Activated CD4-positive, alpha-beta T cell treated with anti-CD3 and anti-CD28 coated beads for 36 hours (primary cell): ENCODE measurements at regions of chr1 and their contacts with region 1.

Region 1: DNA sequence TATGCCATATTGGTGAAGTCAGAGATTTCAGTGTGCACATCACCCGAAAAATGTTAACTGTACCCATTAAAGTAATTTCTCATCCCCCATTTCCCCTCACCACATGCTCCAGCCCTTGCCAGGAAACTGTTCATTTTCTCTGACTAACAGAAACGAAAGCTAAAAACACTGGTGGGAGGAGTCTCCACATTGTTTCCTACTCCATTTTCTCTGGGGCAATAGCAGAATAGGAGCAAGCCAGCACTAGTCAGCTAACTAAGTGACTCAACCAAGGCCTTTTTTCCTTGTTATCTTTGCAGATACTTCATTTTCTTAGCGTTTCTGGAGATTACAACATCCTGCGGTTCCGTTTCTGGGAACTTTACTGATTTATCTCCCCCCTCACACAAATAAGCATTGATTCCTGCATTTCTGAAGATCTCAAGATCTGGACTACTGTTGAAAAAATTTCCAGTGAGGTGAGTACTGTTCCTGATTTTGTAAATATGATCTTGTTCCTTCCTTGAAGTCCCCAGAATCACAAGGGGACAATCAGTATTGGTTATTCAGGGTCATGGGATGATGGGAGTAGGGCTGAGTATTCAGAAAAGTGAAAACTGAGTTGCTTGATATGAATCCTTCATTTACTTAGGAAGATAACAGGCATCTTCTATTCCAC is at the start of gene IFI16:
- DNase-seq: peak; percentile 75
- ATAC-seq: peak; percentile 70
- H3K4me3 Mint-ChIP-seq: peak within 1 kb of the TSS; percentile 82
- H3K27ac Mint-ChIP-seq: peak within 1 kb of the TSS; percentile 97
- H3K4me1 Mint-ChIP-seq: peaks cover 43% of the 10 kb centered on the region
- H3K27me3 Mint-ChIP-seq: no peaks in the 10 kb centered on the region
- total RNA-seq, gene IFI16: 263 to 308 TPM

Region 2: DNA sequence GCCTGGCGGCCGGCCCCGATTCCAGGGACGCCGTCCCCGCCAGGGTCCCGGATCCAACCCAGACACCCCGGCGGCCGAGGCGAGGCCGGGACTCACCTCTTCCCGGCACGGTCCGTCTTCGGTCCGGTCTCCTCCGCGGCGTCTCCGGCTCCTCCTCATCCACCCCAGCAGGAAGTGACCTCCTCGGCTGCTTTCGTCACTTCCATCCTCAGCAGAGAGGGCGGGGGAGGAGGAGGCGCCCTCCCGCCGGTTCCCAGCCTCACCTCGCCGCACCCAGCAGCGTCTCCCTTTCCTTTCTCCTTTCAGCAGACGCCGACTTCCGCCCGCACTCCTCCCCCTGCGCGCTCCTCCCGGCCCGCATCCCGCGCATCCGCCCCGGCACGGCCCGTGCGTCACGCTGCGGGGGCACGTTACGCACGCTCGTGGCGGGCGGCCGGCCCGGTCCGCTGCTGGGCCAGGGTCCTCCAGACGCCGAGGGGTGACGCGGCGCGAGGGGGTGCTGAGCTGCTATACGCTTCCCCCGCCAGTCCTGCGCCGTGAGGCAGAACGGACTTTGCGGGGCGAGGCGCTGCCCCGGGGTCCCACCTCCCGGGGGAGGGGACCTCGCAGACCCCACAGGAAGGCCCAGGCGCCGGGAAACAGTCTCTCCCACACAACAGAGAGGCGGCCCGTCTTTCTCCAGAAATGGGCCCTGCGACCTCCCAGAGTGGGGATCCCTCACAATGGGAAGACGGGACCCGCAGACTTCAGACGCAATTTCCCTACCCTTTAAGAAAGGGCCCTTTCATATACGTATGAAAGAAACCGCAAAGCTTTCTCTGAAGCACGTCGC is 1871.4 kb before region 1 on chr1 and contains the start of gene ETV3:
- CTCF ChIA-PET with region 1: no interaction called
- POLR2A ChIA-PET with region 1: no interaction called
- intact Hi-C with region 1: loop called (anchors 5 kb)
- DNase-seq: peak; percentile 94
- ATAC-seq: peak; percentile 72
- H3K4me3 Mint-ChIP-seq: peak within 1 kb of the TSS; percentile 97
- H3K27ac Mint-ChIP-seq: peak within 1 kb of the TSS; percentile 95
- H3K4me1 Mint-ChIP-seq: peaks cover 75% of the 10 kb centered on the region
- H3K27me3 Mint-ChIP-seq: no peaks in the 10 kb centered on the region
- total RNA-seq, gene ETV3: 32.0 to 36.7 TPM

Region 3: GRCh38 chr1:158654571-158654970 is 355.3 kb before region 1 on chr1:
- CTCF ChIA-PET with region 1: no interaction called
- POLR2A ChIA-PET with region 1: no interaction called
- intact Hi-C with region 1: no loop called
- DNase-seq: peak; percentile 4
- ATAC-seq: no peak
- H3K4me3 Mint-ChIP-seq: no peak overlapping the region
- H3K27ac Mint-ChIP-seq: no peak overlapping the region
- H3K4me1 Mint-ChIP-seq: peaks cover 3% of the 10 kb centered on the region
- H3K27me3 Mint-ChIP-seq: peaks cover 4% of the 10 kb centered on the region

Region 4: DNA sequence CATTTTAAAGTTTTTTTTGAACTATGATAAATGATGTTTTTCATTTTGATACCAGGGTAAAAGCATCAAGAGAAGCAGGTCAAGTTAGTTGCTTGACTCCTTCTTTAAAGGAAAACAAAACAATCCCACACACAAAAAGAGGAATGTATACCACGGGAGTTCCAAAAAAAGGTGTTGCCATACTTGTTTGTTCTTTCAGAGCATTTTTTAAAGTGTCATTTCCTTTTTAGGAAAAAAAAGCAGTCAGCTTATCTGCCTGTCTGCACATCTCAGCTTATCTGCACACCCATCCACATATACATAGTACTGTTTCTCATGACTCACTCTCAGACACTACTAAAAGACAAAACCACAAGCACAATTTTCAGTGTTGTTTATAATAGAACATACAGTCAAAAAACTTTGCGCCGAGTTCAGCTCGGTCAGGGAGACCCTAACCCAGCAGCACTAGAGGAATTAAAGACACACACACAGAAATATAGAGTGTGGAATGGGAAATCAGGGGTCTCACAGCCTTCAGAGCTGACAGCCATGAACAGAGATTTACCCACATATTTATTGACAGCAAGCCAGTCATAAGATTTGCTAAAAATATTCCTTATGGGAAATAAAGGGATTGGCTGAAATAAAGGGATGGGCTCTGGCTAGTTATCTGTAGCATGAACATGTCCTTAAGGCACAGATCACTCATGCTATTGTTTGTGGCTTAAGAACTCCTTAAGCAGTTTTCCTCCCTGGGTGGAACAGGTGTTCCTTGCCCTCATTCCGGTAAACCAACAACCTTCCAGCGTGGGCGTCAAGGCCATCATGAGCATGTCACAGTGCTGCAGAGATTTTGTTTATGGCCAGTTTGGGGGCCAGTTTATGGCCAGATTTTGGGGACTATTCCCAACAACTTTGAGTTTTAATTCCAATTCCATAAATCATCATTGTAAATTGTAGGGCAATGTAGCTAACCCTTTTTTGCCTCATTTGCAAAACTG is 190.1 kb before region 1 on chr1:
- CTCF ChIA-PET with region 1: no interaction called
- POLR2A ChIA-PET with region 1: interaction called, 3 read pairs
- intact Hi-C with region 1: loop called in 1 of 2 experiments (anchors 5 kb)
- DNase-seq: peak; percentile 21
- ATAC-seq: peak; percentile 99
- H3K4me3 Mint-ChIP-seq: no peak overlapping the region
- H3K27ac Mint-ChIP-seq: peak overlapping the region; percentile 34
- H3K4me1 Mint-ChIP-seq: peaks cover 17% of the 10 kb centered on the region
- H3K27me3 Mint-ChIP-seq: peaks cover 3% of the 10 kb centered on the region

Region 5: DNA sequence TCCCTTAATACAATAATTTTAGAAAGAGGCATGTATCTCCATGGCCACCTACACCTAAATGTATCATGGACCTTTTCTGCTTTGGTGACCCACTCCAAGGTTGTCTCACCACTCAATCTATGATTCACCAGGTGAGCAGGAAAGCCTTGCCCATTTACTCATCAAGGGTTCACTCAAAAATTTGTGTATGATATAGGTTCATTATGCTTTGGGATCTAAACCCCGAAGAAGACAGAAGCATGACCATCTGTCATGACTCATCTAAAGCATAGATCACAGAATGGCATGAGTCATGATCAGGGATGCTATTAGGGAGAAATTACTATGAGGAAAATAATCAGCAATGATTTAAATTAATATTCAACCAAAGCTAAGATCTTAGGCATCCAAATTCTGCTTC is 40.0 kb before region 1 on chr1:
- CTCF ChIA-PET with region 1: no interaction called
- POLR2A ChIA-PET with region 1: no interaction called
- intact Hi-C with region 1: loop called (anchors 1 kb)
- DNase-seq: peak; percentile 25
- ATAC-seq: peak; percentile 72
- H3K4me3 Mint-ChIP-seq: no peak overlapping the region
- H3K27ac Mint-ChIP-seq: peak overlapping the region; percentile 88
- H3K4me1 Mint-ChIP-seq: peaks cover 25% of the 10 kb centered on the region
- H3K27me3 Mint-ChIP-seq: peaks cover 3% of the 10 kb centered on the region

Region 6: GRCh38 chr1:159071970-159072582 is 62.2 kb after region 1 on chr1:
- CTCF ChIA-PET with region 1: interaction called, 17 read pairs
- POLR2A ChIA-PET with region 1: interaction called, 43 read pairs
- intact Hi-C with region 1: loop called (anchors 1 kb)
- DNase-seq: no peak
- ATAC-seq: peak; percentile 12
- H3K4me3 Mint-ChIP-seq: peak overlapping the region; percentile 42
- H3K27ac Mint-ChIP-seq: peak overlapping the region; percentile 63
- H3K4me1 Mint-ChIP-seq: peaks cover 52% of the 10 kb centered on the region
- H3K27me3 Mint-ChIP-seq: no peaks in the 10 kb centered on the region

Region 7: DNA sequence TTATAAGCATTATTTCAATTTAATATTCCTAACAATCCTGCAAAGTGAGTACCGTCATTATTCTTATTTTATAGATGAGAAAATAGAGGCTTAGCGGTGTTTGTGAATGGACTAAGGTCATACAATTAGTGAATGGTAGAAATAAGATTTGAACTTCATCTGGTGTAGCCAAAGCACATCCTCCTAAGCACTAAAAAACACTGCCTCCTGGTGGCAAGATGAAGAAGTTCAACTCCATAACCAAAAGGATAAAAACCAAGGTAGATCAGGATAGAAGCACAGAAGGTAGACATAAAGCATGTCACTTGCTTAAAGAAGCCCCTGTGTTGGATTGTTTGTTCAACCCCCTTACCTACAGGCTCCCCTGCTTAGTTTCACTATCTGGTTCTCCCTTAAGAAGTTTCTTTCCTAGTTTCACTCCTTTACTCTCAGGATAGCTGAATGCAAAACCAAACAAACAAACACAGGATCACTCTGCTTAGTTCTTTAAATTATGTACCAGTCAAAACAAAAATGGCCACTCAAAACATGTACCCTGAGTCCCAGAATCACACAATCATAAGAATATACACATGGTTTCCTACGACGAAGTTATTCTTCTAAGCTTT is 79.5 kb after region 1 on chr1:
- CTCF ChIA-PET with region 1: interaction called, 11 read pairs
- POLR2A ChIA-PET with region 1: interaction called, 19 read pairs
- intact Hi-C with region 1: loop called in 1 of 2 experiments (anchors 1 kb)
- DNase-seq: no peak
- ATAC-seq: peak; percentile 37
- H3K4me3 Mint-ChIP-seq: no peak overlapping the region
- H3K27ac Mint-ChIP-seq: peak overlapping the region; percentile 78
- H3K4me1 Mint-ChIP-seq: peaks cover 51% of the 10 kb centered on the region
- H3K27me3 Mint-ChIP-seq: peaks cover 2% of the 10 kb centered on the region

Region 8: DNA sequence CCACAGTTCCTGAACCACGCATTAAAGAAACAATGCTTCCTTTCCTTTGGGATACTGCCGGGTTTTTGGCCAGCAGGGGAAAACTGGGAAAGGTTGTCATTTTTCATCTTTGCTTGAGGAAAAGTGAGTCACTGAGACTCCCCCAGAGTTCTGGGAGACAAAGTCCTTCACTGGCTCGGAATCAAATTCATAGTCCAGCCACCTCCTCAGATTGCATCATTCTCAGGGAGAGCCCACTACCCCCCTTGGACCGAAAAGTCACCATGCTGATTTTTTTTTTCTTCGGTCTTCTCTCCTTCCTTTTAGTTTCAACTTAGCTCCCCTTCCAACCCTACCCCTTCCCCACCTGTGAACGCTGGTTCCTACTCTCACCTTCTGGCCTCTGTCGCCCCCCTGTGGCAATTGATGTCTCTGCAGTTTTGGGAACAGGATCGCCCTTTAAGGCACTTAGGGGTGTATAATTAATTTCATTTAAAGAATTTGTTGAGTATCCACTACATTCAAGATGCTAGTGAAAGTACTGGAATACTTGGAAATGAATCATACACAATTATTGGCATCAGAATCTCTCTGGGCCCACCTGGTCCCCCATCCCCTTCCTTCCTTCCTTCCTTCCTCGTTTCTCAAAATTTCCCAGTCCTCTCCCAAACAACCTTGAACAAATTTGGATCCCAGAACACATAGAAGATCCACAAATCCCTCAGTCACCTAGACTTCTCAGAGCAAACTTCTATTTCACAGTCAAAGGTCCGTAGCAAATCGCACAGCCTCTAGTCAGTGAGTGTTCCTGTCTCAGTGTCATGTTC is 201.7 kb after region 1 on chr1:
- CTCF ChIA-PET with region 1: no interaction called
- POLR2A ChIA-PET with region 1: no interaction called
- intact Hi-C with region 1: no loop called
- DNase-seq: peak; percentile 75
- ATAC-seq: peak; percentile 39
- H3K4me3 Mint-ChIP-seq: no peak overlapping the region
- H3K27ac Mint-ChIP-seq: no peak overlapping the region
- H3K4me1 Mint-ChIP-seq: peaks cover 17% of the 10 kb centered on the region
- H3K27me3 Mint-ChIP-seq: peaks cover 53% of the 10 kb centered on the region

Region 9: DNA sequence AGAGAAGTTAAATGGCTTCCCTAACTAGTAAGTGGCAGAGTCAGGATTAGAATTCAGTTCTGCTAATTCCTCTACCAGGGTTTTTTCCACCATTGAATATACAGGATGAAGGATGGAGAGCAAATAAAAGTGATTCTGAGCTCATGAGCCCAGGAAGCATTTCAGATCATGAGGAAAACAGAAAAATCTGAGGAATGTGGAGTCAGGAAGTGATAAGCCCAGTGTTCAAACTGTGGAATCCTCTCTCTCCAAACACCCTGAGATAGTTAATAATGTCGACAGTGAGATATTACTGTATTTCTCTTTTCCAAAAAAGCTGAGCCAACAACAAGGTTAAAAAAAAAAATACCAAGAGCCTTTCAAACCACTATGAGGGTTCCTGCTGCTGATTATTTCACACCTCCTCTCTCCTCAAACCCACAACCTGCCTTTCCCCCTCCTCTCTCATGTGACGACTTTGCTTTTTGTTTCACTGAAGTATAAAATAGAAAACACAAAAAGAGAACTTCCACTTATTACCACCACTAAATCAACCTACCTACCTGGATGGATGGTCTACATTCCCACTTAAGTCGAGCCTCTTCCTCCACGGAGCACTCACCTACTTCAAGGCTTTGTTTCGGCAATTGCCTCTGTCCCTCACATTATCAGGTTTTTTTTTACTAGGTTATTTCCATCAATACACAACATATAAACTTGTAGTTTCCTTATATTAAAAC is 1628.1 kb after region 1 on chr1:
- CTCF ChIA-PET with region 1: no interaction called
- POLR2A ChIA-PET with region 1: no interaction called
- intact Hi-C with region 1: loop called in 1 of 2 experiments (anchors 5 kb)
- DNase-seq: peak; percentile 59
- ATAC-seq: peak; percentile 48
- H3K4me3 Mint-ChIP-seq: peak overlapping the region; percentile 67
- H3K27ac Mint-ChIP-seq: peak overlapping the region; percentile 95
- H3K4me1 Mint-ChIP-seq: peaks cover 93% of the 10 kb centered on the region
- H3K27me3 Mint-ChIP-seq: no peaks in the 10 kb centered on the region